MCF 10A (cell line): ENCODE measurements at regions of chr4 and their contacts with region 1.

Region 1: DNA sequence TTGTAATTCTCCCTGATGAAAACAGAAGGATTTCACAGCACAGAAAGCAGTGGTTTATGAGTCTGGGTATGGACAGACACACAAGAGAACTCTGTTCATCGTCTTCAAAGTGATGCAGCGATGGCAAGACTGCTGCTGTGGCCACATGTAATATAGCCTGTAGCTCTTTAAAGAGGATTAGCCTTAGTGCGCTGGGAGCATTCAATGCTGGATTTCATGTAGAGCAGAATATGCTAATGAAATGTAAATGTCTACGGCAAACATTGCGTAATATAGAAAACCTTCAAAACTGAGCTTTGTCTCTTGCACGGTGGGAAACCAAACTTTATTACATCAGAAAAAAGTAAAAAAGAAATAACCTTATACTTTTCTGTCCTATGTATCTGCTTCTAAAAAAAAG is 42.9 kb downstream of the ALPK1 start:
- DNase-seq: no peak
- H3K4me3 Mint-ChIP-seq: no peak overlapping the region
- H3K27ac Mint-ChIP-seq: no peak overlapping the region
- H3K4me1 Mint-ChIP-seq: no peaks in the 10 kb centered on the region
- H3K27me3 Mint-ChIP-seq: no peaks in the 10 kb centered on the region
- CTCF ChIP-seq: no peak

Region 2: DNA sequence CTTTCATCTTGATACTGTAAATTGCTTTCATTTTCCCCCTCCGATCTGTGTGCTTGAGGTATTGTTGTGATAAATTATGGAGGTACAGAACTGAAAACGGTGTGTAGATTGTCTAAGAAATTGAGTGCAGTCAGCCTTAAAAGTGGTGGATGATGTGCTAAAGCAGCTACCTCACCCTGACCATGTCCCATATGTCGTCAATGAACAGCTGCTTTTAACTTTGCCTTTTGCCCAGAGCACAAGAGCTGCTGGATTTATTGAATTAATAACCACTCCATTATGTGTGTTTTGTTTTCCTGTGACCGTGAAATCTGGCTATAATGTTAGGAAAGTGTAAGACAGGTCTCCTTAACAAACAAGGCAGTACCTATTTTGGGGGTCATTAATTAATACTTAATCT is 1135.2 kb before region 1 on chr4:
- CTCF ChIA-PET with region 1: no interaction called
- POLR2A ChIA-PET with region 1: no interaction called
- intact Hi-C with region 1: no loop called
- DNase-seq: no peak
- H3K4me3 Mint-ChIP-seq: no peak overlapping the region
- H3K27ac Mint-ChIP-seq: no peak overlapping the region
- H3K4me1 Mint-ChIP-seq: no peaks in the 10 kb centered on the region
- H3K27me3 Mint-ChIP-seq: no peaks in the 10 kb centered on the region
- CTCF ChIP-seq: no peak

Region 3: DNA sequence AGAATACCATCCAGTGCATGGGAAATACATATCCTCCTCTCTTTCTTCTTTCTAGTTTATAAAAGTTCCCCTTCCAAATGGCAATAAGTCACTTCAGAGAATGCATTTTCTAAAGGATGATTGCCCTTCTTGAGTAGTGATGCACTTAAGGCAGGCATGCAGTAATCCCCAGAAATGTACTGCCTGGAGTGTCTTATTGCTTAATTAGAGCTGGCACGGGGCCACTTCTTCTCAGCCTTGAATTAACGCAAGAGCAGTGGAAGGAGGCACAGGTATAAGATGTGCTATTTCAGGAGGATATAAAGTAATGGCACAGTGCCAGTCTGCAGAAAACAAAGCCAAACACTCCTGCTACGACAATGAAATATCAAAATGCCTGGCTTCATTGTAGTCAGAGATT is 566.2 kb before region 1 on chr4:
- CTCF ChIA-PET with region 1: no interaction called
- POLR2A ChIA-PET with region 1: no interaction called
- intact Hi-C with region 1: no loop called
- DNase-seq: peak; percentile 88
- H3K4me3 Mint-ChIP-seq: no peak overlapping the region
- H3K27ac Mint-ChIP-seq: no peak overlapping the region
- H3K4me1 Mint-ChIP-seq: peaks cover 5% of the 10 kb centered on the region
- H3K27me3 Mint-ChIP-seq: peaks cover 61% of the 10 kb centered on the region
- CTCF ChIP-seq: no peak

Region 4: GRCh38 chr4:111838406-111838930 is 501.6 kb before region 1 on chr4:
- CTCF ChIA-PET with region 1: no interaction called
- POLR2A ChIA-PET with region 1: no interaction called
- intact Hi-C with region 1: no loop called
- DNase-seq: no peak
- H3K4me3 Mint-ChIP-seq: no peak overlapping the region
- H3K27ac Mint-ChIP-seq: no peak overlapping the region
- H3K4me1 Mint-ChIP-seq: no peaks in the 10 kb centered on the region
- H3K27me3 Mint-ChIP-seq: peaks cover 42% of the 10 kb centered on the region
- CTCF ChIP-seq: no peak

Region 5: GRCh38 chr4:112523764-112524505 is 183.9 kb after region 1 on chr4:
- CTCF ChIA-PET with region 1: interaction called, 14 read pairs
- POLR2A ChIA-PET with region 1: no interaction called
- intact Hi-C with region 1: no loop called
- DNase-seq: peak; percentile 62
- H3K4me3 Mint-ChIP-seq: peak overlapping the region; percentile 69
- H3K27ac Mint-ChIP-seq: no peak overlapping the region
- H3K4me1 Mint-ChIP-seq: no peaks in the 10 kb centered on the region
- H3K27me3 Mint-ChIP-seq: peaks cover 20% of the 10 kb centered on the region
- CTCF ChIP-seq: peak; percentile 87